MCF 10A (cell line): ENCODE measurements at regions of chr3 and their contacts with region 1.

Region 1: GRCh38 chr3:50611464-50612233 is at the start of gene CISH:
- DNase-seq: peak; percentile 93
- H3K4me3 Mint-ChIP-seq: peak within 1 kb of the TSS; percentile 93
- H3K27ac Mint-ChIP-seq: peak within 1 kb of the TSS; percentile 42
- H3K4me1 Mint-ChIP-seq: peaks cover 40% of the 10 kb centered on the region
- H3K27me3 Mint-ChIP-seq: no peaks in the 10 kb centered on the region
- CTCF ChIP-seq: peak; percentile 37
- total RNA-seq, gene CISH: 0.26 and 0.59 TPM in 2 replicates

Region 2: DNA sequence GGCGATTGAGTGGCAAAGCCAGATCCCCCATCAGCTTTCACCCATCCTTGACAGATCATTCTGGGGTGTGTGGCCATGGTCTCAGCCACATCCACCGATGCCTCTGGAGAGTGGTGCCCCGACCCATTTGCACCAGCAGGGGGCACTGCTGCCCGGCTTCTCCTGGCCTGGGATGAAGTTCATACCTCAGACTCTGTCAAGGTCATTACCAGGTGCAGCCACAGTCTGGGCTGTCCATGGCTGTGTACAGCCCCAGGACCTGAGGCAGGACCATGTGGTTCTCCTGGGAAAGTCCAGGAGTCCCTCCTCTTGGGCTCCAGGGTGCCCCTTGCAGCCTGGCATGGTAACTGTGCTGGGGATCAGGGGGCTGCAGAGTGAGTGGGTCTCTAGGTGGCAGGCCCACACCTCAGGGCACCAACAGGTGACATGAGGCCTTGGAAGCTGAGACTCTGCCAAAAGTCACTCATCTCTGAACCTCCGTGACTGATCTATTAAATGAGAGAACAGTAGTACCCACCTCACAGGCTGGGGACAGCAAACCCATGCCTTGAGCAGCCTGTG is 175.5 kb before region 1 on chr3:
- CTCF ChIA-PET with region 1: interaction called, 6 read pairs
- POLR2A ChIA-PET with region 1: no interaction called
- intact Hi-C with region 1: loop called (anchors 1 kb)
- DNase-seq: peak; percentile 54
- H3K4me3 Mint-ChIP-seq: no peak overlapping the region
- H3K27ac Mint-ChIP-seq: no peak overlapping the region
- H3K4me1 Mint-ChIP-seq: no peaks in the 10 kb centered on the region
- H3K27me3 Mint-ChIP-seq: peaks cover 14% of the 10 kb centered on the region
- CTCF ChIP-seq: peak; percentile 87

Region 3: DNA sequence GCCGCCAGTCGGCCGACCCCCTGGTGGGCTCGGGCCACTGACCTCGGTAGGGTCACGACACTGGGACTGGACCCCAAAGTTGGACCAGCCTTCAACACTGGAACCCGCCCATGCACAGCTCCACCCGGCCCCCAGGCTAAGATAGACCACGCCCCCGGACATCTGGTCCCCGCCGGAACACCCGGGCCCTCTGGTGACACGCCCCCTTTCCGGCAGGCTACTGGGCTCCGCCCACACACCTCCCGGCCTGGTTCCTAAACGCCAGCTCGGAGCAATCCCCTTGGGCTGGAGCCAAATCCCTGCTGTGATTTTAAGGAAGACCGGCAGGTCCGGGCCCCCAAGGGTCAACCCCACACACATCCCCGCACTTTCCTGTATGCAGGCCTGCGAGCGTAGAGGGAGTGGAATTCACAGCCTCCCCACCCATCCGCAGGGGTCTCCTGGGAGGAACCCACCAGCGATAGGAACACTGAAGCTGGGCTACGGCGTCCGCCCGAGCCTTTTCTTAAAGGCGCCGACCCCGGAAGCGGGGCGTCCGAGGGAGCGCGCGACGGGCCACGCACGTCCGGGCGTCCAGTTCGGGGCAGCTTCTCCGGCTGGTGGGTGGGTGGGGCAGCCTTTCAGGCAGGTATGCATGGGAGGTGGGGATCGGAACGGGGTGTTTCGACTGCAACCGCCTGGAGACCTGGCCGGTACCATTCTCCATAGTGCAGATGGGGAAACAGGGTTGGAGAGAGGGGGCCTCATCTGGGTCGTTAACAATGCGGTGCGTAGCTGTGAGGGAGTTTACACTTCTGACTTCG is 42.5 kb before region 1 on chr3 and contains the start of gene HEMK1:
- CTCF ChIA-PET with region 1: interaction called, 397 read pairs
- POLR2A ChIA-PET with region 1: interaction called, 59 read pairs
- intact Hi-C with region 1: loop called (anchors 1 kb)
- DNase-seq: peak; percentile 94
- H3K4me3 Mint-ChIP-seq: peak within 1 kb of the TSS; percentile 91
- H3K27ac Mint-ChIP-seq: peak within 1 kb of the TSS; percentile 95
- H3K4me1 Mint-ChIP-seq: no peaks in the 10 kb centered on the region
- H3K27me3 Mint-ChIP-seq: no peaks in the 10 kb centered on the region
- CTCF ChIP-seq: no peak
- total RNA-seq, gene HEMK1: 19.9 and 23.8 TPM in 2 replicates

Region 4: DNA sequence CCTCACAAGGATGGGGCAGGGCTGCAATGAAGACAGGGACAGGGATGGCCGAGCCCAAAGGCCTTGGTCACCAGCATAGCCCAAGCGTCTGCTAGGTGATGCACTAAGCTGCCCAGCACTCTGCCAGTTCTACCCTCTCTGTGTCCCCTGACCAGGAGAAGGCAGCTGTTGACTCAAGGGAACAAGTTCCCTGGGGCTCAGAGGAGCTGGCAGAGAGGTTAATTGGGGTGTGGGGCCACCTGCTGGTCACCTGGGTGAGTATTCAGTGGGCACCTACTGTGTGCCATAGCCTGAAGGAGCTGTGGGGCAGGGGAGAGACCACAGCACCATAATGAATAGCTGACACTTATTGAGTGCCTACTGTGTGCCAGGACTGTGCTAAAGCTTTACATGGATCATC is 41.1 kb after region 1 on chr3:
- CTCF ChIA-PET with region 1: interaction called, 104 read pairs
- POLR2A ChIA-PET with region 1: interaction called, 10 read pairs
- intact Hi-C with region 1: loop called (anchors 1 kb)
- DNase-seq: peak; percentile 60
- H3K4me3 Mint-ChIP-seq: no peak overlapping the region
- H3K27ac Mint-ChIP-seq: no peak overlapping the region
- H3K4me1 Mint-ChIP-seq: no peaks in the 10 kb centered on the region
- H3K27me3 Mint-ChIP-seq: no peaks in the 10 kb centered on the region
- CTCF ChIP-seq: peak; percentile 71

Region 5: DNA sequence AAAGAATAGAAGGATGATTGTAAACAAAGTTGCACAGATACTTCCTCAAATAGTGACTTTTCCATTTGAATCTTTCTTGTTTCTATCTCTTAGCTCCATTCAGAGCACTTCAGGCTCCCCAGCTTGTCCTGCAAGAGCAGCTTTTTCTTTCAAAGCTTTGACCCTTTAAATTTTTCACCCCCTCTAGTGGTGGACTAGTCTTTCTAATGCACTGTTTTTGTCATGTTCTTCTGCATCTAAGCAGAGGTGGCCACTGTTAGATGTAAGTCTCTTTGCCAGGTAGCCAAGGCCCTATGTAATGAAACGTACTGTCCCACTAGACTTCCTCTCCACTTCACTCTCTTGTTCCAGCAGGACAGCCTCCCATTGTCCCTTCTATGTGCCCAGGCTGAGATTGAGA is 699.4 kb after region 1 on chr3:
- CTCF ChIA-PET with region 1: interaction called, 12 read pairs
- POLR2A ChIA-PET with region 1: no interaction called
- intact Hi-C with region 1: no loop called
- DNase-seq: peak; percentile 47
- H3K4me3 Mint-ChIP-seq: no peak overlapping the region
- H3K27ac Mint-ChIP-seq: no peak overlapping the region
- H3K4me1 Mint-ChIP-seq: no peaks in the 10 kb centered on the region
- H3K27me3 Mint-ChIP-seq: no peaks in the 10 kb centered on the region
- CTCF ChIP-seq: peak; percentile 22

Region 6: GRCh38 chr3:51384726-51385473 is 773.3 kb after region 1 on chr3 and contains the start of gene MANF:
- CTCF ChIA-PET with region 1: interaction called, 59 read pairs
- POLR2A ChIA-PET with region 1: interaction called, 28 read pairs
- intact Hi-C with region 1: loop called (anchors 1 kb)
- DNase-seq: peak; percentile 98
- H3K4me3 Mint-ChIP-seq: peak within 1 kb of the TSS; percentile 90
- H3K27ac Mint-ChIP-seq: peak within 1 kb of the TSS; percentile 98
- H3K4me1 Mint-ChIP-seq: peaks cover 26% of the 10 kb centered on the region
- H3K27me3 Mint-ChIP-seq: no peaks in the 10 kb centered on the region
- CTCF ChIP-seq: no peak
- total RNA-seq, gene MANF: 271 and 273 TPM in 2 replicates

Region 7: GRCh38 chr3:51670823-51671733 is 1059.4 kb after region 1 on chr3 and contains the start of gene TEX264:
- CTCF ChIA-PET with region 1: interaction called, 10 read pairs
- POLR2A ChIA-PET with region 1: no interaction called
- intact Hi-C with region 1: loop called (anchors 10 kb)
- DNase-seq: peak; percentile 90
- H3K4me3 Mint-ChIP-seq: peak within 1 kb of the TSS; percentile 89
- H3K27ac Mint-ChIP-seq: peak within 1 kb of the TSS; percentile 86
- H3K4me1 Mint-ChIP-seq: peaks cover 45% of the 10 kb centered on the region
- H3K27me3 Mint-ChIP-seq: no peaks in the 10 kb centered on the region
- CTCF ChIP-seq: no peak
- total RNA-seq, gene TEX264: 41.3 and 46.4 TPM in 2 replicates